ENCODE measurements at regions of chr16 and their contacts with region 1.

Region 1: DNA sequence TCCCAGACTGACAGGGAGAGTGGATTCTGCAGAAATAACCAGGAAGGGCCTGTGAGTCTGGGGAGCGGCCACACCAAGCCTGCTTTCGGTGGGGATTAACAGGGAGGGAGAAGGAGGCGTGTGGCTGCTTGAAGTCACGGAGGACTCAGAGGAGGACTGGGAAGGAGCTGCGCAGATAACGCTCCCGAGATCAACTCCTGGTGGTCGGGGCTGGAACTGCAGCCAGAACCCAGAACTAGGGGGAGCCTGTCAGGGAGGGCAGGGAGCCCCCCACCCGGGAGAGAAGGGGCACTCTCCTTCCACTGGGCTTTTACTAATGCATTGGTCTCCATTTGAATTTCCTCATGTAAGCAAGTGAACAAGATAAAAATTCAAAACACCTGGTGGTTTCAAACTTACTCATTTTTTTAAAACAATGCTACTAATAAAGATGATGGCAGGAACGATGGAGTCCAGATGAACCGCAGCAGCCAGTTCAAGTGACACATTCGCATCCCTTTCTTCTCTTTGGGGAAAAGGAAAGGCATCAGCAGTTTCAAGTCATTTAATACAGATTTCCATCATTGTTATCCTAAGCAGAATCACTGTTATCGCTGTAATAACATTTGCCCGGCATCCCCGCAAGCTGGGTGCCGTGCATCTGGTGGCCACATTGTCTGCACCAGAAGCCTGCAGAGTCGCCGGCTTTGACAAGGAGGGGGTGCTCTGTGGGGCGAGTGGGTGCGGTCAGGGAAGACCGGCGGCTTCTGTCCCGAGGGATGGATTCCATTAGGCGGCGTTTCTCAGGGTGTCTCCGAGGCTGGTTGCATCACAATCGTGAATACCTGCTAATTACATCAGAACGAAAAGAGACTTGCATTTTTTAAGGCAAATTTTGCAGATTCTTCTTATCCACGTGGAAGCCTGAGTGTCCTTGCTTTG is 183.0 kb downstream of the FOXL1 start:
- DNase-seq: no peak
- H3K4me3 ChIP-seq: peak overlapping the region; percentile 47
- CTCF ChIP-seq: peak; percentile 89

Region 2: DNA sequence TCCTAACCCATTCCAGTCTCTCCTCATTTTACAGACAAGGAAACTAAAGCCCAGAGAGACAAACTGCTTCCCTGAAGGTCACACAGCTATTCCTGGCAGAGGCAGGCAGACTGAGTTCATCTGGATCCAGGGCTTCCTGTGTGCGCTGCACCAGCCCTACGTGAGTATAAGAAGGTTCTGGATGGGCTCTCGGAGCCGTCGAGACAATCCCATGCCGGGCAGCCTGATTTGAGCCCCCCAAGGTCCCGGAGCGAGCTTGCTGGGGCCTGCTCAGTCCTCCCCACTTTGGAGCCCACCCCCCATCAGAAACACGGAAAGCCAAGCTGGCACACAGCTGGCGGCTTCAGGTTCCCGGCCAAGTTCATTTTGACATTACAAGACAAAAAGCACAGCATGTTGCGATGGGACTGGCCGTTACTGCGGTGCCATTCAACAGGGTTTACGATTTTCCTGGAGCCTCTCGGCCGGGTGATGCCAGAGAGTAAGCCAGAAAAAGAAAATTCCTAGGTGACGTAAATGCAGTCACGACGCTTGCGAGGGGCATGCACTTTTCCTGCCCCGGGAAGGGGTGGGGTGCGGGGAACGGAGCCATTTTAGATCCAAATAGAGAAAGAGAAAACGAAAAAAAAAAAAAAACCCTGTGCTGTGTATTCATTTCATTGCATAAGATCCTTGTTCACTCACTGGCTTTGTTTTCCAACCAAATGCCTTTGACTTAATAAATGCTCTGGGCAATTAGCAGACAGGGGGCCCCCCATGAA is 418.2 kb before region 1 on chr16:
- CTCF ChIA-PET with region 1: no interaction called
- POLR2A ChIA-PET with region 1: no interaction called
- DNase-seq: no peak
- H3K4me3 ChIP-seq: peak overlapping the region; percentile 6
- CTCF ChIP-seq: no peak

Region 3: DNA sequence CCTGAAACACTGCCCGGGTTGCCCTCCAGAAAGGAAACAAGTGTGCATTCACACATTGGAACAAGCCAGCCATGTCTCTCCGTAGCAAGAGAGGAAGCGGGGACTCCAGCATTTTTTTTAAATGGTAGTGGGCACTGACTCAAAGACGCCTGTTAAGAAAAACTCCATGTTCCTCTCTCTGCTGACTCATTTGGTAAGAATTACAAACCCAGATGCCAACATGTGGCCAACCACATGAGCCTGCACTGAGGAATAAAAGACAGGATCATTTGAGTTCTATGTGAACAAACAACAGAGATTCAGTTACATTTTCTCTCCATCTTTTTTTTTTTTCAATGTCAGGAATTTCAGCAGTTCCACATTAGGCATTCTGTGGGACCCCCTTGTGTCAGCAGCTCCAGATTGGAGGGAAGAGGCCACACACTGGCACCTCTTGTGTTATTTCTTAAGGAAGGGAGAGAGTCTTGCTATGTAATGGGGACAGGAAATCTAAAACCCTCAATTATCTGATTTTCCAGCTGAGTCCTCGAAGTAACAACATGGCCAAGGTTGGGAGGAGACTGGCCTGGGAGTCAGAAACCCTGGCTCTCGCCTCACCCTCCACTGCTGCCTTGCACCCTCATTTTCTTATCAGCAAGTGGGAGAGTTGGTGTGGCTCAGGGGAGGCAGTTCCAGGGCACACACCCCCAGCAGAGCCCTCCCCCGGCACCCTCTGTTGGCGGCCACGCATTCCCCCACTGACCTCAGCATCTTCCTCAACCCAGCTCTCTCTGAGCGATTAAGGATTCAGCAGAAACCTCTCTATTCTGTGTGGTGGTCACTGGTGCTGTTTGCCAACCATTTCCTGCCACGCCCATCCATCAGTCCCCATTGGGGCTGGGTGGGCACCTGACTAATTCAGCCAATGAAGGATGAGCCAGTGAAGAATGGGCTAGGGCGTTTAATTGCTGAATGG is 10.0 kb before region 1 on chr16:
- CTCF ChIA-PET with region 1: interaction called, 32 read pairs
- POLR2A ChIA-PET with region 1: no interaction called
- DNase-seq: no peak
- H3K4me3 ChIP-seq: no peak overlapping the region
- CTCF ChIP-seq: no peak

Region 4: DNA sequence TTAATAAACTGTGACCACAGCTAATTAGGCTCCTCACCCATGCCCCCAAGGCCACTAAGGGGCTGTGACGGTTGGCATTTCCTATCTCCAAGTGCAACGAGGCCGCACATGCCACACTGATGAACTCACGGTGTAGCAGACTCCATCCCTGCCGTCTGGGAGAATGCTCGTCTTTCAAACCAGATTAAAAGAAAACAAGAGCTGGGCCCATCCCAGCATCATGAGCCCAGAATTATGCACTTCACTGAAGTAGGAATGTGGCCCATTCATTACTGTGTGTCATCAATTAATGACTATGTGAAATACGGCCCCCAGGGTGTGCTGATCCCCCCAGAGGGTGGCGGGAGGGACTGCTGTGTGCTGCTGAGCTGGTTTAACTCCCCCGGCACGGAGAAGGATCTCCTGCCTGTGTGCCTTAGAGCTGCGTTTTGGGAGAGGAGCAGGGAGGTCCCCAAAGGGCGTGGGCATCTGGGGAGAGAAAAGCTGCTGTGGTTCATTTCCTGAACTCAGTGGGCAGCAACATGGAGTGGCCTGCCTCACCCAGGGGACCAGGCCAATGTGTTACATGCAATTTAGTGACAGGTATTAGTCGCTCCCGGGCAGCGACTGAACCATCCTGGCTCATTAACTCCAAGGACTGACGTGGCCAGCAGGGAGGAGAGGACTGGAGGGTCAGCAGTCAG is 11.4 kb after region 1 on chr16:
- CTCF ChIA-PET with region 1: interaction called, 40 read pairs
- POLR2A ChIA-PET with region 1: no interaction called
- DNase-seq: peak; percentile 76
- H3K4me3 ChIP-seq: no peak overlapping the region; the same call in 1 of the 2 replicates
- CTCF ChIP-seq: no peak

Region 5: DNA sequence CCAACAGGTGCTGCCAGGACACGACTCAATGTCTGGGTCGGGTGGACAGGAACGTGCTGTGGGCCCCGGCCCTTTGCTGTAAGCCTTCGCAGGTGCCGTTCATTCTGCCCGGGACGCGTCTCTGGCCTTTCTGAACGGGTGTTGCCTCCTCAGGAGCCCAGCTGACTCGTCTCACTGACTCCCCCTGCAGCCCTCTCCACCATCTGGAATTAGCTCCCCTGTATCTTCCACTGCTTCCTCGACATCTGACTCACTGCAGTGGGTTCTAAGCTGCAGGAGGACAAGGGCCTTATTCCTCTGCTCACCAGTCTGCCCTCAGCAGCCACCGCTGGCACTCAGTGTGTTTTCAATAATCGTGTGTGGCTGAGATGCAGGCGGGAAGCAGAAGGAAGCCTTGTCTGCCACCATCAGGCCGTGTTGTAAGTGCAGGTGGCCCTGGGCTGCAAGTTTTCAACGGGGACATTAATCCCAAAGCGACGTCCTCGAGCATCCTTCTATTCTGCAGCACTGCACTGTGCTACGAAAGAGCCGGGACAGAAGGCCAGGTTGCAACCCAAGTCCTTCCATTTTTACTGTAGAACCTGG is 73.2 kb after region 1 on chr16:
- CTCF ChIA-PET with region 1: interaction called, 21 read pairs
- POLR2A ChIA-PET with region 1: no interaction called
- DNase-seq: peak; percentile 71
- H3K4me3 ChIP-seq: no peak overlapping the region
- CTCF ChIP-seq: peak; percentile 54

Region 6: DNA sequence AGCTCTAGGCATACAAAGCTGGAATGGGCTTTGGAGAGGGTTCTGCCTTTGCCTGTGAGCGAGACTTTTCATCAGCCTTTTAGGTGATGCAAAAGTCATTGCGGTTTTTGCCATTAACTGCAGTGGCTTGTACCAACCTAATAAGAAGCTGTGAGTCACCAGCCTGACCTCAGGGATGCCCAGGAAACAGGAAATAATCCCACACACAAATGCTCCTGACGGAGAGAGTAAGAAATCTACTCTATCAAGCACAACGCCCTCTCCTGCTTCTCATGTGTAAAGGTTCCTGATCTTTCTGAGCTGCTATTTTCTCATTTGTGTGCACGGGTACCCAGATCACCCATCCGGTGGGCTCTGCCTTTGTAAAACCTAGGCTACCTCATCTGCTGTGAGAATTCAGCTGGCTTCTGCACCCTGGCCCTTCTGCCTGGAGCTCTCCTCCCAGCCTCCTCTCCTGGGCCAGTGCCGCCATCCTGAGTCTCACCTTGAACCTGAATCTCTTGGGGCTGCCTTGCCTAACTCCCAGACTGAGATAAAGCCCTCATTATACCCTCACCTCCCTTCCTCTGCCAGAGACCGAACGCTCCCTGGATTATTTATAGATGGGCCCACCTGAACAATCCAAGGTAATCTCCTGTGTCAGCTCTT is 256.1 kb after region 1 on chr16:
- CTCF ChIA-PET with region 1: interaction called, 10 read pairs
- POLR2A ChIA-PET with region 1: no interaction called
- DNase-seq: peak; percentile 71
- H3K4me3 ChIP-seq: no peak overlapping the region
- CTCF ChIP-seq: peak; percentile 63

Measured in AG04449 (cell line).